Activated CD8-positive, alpha-beta memory T cell treated with anti-CD3 and anti-CD28 coated beads, Interleukin-2, amount 10 ng/mL, durations not matched to agents 7 days and 5 days (primary cell): ENCODE measurements at regions of chr12 and their contacts with region 1.

Region 1: DNA sequence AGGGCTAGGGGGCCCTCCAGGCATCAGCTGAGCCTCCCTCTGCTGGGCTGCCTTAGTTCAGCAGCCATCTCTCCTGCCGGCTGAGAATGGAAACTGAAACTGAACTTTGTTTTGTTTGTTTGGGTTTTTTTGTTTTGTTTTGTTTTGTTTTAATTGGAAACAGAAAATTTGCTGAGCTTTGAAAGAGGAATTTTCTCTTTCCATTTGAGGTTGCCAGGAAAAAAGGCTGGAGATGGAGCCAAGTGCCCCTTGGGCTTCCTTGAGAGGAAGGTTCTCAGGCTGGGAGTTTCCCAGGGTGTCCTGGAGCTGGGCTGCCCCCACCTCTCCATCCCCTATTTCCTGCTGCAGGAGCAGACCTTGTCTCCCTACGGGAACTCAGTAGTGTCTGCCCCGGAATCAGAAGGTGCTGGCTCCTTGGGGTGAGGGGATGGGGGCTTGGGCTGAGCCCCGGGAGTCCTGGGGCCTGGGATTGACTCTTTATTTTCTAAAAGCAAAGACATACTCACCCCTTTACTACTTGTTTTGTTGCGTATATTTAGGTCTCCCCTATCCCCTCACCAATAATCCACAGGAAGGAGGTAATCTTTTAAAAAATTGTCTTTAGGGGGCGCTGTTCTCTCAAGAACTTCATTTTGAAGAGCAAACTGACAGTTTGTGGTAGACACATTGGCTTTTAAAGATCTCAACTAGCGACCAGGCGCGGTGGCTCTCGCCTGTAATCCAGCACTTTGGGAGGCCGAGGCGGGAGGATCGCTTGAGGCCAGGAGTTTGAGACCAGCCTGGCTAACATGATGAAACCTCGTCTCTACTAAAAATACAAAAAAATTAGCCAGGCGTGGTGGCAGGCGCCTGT is 21.3 kb upstream of the OASL start:
- DNase-seq: peak; percentile 87
- ATAC-seq: peak; percentile 96
- H3K4me3 Mint-ChIP-seq: peak overlapping the region; percentile 77
- H3K27ac Mint-ChIP-seq: peak overlapping the region; percentile 99
- H3K4me1 Mint-ChIP-seq: peaks cover 29% of the 10 kb centered on the region
- H3K27me3 Mint-ChIP-seq: no peaks in the 10 kb centered on the region

Region 2: GRCh38 chr12:120928864-120929652 is 131.3 kb before region 1 on chr12:
- CTCF ChIA-PET with region 1: no interaction called
- DNase-seq: no peak
- ATAC-seq: no peak
- H3K4me3 Mint-ChIP-seq: no peak overlapping the region
- H3K27ac Mint-ChIP-seq: no peak overlapping the region
- H3K4me1 Mint-ChIP-seq: peaks cover 2% of the 10 kb centered on the region
- H3K27me3 Mint-ChIP-seq: peaks cover 6% of the 10 kb centered on the region

Region 3: DNA sequence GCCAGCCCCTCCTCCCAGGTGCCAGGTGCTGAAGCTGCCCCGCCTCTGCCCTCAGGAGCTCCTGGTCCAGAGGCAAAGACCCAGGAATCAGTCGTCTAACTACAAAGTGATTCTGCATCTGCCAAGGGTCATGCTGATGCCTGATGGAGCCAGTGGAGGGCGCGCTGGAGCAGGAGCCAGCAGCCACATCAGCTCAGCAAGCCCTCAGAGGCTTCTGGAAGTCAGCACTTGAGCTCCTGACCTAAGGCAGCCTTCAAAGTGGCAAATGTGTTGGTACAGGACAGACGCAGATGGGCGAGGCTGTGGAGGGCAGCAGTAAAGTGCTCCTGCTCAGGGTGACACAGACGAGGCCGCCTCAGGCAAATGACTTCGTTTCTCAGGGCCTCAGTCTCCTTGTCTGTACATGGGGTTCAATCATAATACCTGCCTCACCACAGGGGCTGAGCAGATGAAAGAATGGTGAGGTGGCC is 55.0 kb before region 1 on chr12:
- CTCF ChIA-PET with region 1: interaction called, 19 read pairs
- DNase-seq: peak; percentile 70
- ATAC-seq: peak; percentile 82
- H3K4me3 Mint-ChIP-seq: no peak overlapping the region
- H3K27ac Mint-ChIP-seq: peak overlapping the region; percentile 63
- H3K4me1 Mint-ChIP-seq: peaks cover 4% of the 10 kb centered on the region
- H3K27me3 Mint-ChIP-seq: no peaks in the 10 kb centered on the region

Region 4: DNA sequence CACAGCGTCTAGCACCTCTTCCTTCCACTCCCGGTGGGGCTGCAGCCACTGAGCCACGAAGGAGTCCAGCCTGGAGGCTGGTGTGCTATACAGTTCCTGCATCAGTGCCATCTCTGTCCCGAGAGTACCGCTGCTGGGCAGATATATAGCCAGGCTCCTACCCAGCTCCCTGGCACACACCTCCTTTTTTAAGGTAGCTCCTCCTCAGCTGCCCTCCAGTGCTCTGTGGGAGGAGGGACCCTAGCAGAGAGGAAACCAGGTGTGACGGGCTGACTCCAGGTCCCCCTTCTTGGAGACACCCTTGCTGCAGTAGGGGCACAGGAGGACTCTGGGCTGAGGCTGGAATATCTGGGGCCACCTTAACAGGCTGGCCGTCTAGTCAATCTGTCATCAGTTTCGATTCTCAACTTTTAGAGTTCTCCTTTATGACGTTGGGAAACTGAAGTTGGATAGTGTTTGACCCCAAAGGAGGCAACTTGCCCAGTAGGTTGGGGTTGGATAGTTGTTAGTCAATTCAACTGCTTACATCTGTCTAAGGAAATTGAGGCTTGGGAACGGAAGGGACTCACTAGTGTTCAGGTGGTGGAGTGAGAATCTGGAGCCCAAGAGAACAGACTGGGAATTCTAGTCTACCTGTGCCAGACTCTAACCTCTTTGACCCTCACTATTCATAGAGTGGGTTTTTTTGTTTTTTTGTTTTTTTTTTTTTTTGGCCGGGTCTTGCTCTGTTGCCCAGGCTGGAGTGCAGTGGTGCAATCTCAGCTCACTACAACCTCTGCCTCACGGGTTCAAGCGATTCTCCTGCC is 21.3 kb before region 1 on chr12 and contains the start of gene OASL:
- CTCF ChIA-PET with region 1: interaction called, 73 read pairs
- DNase-seq: peak; percentile 87
- ATAC-seq: peak; percentile 80
- H3K4me3 Mint-ChIP-seq: peak within 1 kb of the TSS; percentile 93
- H3K27ac Mint-ChIP-seq: peak within 1 kb of the TSS; percentile 97
- H3K4me1 Mint-ChIP-seq: peaks cover 39% of the 10 kb centered on the region
- H3K27me3 Mint-ChIP-seq: peaks cover 12% of the 10 kb centered on the region
- total RNA-seq, gene OASL: 55.3 to 135 TPM

Region 5: GRCh38 chr12:121095544-121096198 is 35.3 kb after region 1 on chr12:
- CTCF ChIA-PET with region 1: interaction called, 156 read pairs
- DNase-seq: peak; percentile 87
- ATAC-seq: peak; percentile 89
- H3K4me3 Mint-ChIP-seq: peak overlapping the region; percentile 77
- H3K27ac Mint-ChIP-seq: peak overlapping the region; percentile 81
- H3K4me1 Mint-ChIP-seq: peaks cover 44% of the 10 kb centered on the region
- H3K27me3 Mint-ChIP-seq: peaks cover 22% of the 10 kb centered on the region

Region 6: GRCh38 chr12:121110211-121110940 is 50.0 kb after region 1 on chr12:
- CTCF ChIA-PET with region 1: interaction called, 52 read pairs
- DNase-seq: peak; percentile 79
- ATAC-seq: peak; percentile 87
- H3K4me3 Mint-ChIP-seq: no peak overlapping the region
- H3K27ac Mint-ChIP-seq: peak overlapping the region; percentile 5
- H3K4me1 Mint-ChIP-seq: peaks cover 13% of the 10 kb centered on the region
- H3K27me3 Mint-ChIP-seq: no peaks in the 10 kb centered on the region

Region 7: DNA sequence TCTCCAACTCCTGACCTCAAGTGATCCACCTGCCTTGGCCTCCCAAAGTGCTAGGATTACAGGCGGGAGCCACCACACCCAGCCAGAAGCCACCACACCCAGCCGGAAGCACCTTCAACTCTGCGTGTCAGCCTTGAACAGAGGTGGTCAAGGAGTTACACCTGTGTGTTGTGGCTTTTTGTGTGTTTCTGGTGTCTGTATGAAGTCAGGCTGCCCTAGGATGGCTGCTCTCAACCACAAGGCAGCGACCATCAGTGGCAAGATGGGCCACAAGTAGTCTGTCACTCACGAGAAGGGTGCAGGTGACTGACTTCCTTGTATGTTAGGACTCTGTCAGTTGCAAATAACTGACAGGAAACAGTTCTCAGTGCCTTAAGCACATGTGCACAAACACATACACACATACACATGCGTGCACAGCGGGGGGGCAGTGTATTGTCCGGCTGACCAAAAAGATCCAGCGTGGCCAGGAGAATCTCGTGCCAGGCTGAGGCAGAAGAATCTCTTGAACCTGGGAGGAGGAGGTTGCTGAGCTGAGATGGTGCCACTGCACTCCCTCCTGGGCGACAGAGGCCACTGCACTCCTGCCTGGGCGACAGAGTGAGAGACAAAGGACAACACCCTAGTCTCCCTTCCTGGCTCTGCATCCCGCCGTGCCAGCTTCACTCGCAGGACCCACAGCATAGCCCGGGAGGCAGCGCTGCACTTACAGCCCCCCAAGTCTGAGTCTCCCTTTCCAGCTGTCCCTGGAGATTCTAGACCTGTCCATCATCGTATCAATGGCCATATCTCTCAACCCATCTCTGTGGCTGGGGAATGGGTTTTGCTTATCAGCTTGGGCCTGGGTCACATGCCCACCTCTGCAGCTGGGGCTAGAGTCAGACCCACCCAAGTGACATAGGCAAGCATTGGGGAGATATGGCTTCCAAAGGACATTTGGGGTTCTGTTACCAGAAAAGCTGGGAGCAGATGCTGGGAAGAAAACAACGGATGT is 163.2 kb after region 1 on chr12:
- CTCF ChIA-PET with region 1: interaction called, 21 read pairs
- DNase-seq: peak; percentile 91
- ATAC-seq: peak; percentile 64
- H3K4me3 Mint-ChIP-seq: peak overlapping the region; percentile 34
- H3K27ac Mint-ChIP-seq: peak overlapping the region; percentile 88
- H3K4me1 Mint-ChIP-seq: peaks cover 56% of the 10 kb centered on the region
- H3K27me3 Mint-ChIP-seq: no peaks in the 10 kb centered on the region